Activated T-helper 1 cell treated with anti-CD3 and anti-CD28 coated beads, Interleukin-12 subunit alpha, Interleukin-12 subunit beta, Interleukin-2, Interleukin-4 antibody, amounts not matched to agents 30 ng/mL and 10 ng/mL and 1 ng/mL, durations not matched to agents 14 hours and 24 hours and 36 hours (primary cell): ENCODE measurements at regions of chrX and their contacts with region 1.

Region 1: GRCh38 chrX:39859991-39860861 is 237.5 kb downstream of the BCOR start:
- DNase-seq: peak; percentile 79
- H3K4me3 Mint-ChIP-seq: peak overlapping the region; percentile 70
- H3K27ac Mint-ChIP-seq: peak overlapping the region; percentile 98
- H3K4me1 Mint-ChIP-seq: peaks cover 60% of the 10 kb centered on the region
- H3K27me3 Mint-ChIP-seq: no peaks in the 10 kb centered on the region

Region 2: GRCh38 chrX:39201305-39201990 is 658.8 kb before region 1 on chrX:
- intact Hi-C with region 1: loop called (anchors 10 kb)
- DNase-seq: no peak
- H3K4me3 Mint-ChIP-seq: no peak overlapping the region
- H3K27ac Mint-ChIP-seq: peak overlapping the region; percentile 79
- H3K4me1 Mint-ChIP-seq: peaks cover 82% of the 10 kb centered on the region
- H3K27me3 Mint-ChIP-seq: no peaks in the 10 kb centered on the region

Region 3: DNA sequence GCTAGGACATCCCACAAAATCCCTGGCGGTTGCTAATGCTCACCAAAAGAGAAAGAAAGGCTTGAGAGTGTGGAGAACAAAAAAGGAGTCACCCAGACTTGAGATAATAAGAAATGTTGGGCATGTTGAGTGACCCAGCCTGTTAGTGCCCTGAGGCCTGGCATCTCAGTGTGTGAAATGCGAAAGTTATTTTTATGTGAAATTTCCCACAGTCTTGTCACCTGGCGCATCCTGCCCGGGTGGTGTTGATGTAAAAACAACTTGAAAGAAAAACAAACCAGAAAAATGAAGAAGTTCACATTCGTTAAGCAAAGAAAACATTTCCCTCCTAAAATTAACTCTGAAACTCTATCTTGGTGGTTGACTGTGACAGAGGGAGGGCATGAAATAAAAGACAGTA is 563.8 kb before region 1 on chrX:
- intact Hi-C with region 1: no loop called
- DNase-seq: no peak
- H3K4me3 Mint-ChIP-seq: no peak overlapping the region
- H3K27ac Mint-ChIP-seq: no peak overlapping the region
- H3K4me1 Mint-ChIP-seq: peaks cover 46% of the 10 kb centered on the region
- H3K27me3 Mint-ChIP-seq: no peaks in the 10 kb centered on the region

Region 4: GRCh38 chrX:39550795-39551361 is 309.3 kb before region 1 on chrX:
- intact Hi-C with region 1: no loop called
- DNase-seq: no peak
- H3K4me3 Mint-ChIP-seq: no peak overlapping the region
- H3K27ac Mint-ChIP-seq: no peak overlapping the region
- H3K4me1 Mint-ChIP-seq: no peaks in the 10 kb centered on the region
- H3K27me3 Mint-ChIP-seq: peaks cover 2% of the 10 kb centered on the region

Region 5: GRCh38 chrX:39730662-39731397 is 129.4 kb before region 1 on chrX:
- intact Hi-C with region 1: loop called (anchors 1 kb)
- DNase-seq: peak; percentile 31
- H3K4me3 Mint-ChIP-seq: peak overlapping the region; percentile 54
- H3K27ac Mint-ChIP-seq: peak overlapping the region; percentile 84
- H3K4me1 Mint-ChIP-seq: peaks cover 30% of the 10 kb centered on the region
- H3K27me3 Mint-ChIP-seq: no peaks in the 10 kb centered on the region

Region 6: GRCh38 chrX:39814391-39814790 is 45.8 kb before region 1 on chrX:
- intact Hi-C with region 1: loop called (anchors 1 kb)
- DNase-seq: peak; percentile 8
- H3K4me3 Mint-ChIP-seq: no peak overlapping the region
- H3K27ac Mint-ChIP-seq: no peak overlapping the region
- H3K4me1 Mint-ChIP-seq: peaks cover 42% of the 10 kb centered on the region
- H3K27me3 Mint-ChIP-seq: no peaks in the 10 kb centered on the region

Region 7: DNA sequence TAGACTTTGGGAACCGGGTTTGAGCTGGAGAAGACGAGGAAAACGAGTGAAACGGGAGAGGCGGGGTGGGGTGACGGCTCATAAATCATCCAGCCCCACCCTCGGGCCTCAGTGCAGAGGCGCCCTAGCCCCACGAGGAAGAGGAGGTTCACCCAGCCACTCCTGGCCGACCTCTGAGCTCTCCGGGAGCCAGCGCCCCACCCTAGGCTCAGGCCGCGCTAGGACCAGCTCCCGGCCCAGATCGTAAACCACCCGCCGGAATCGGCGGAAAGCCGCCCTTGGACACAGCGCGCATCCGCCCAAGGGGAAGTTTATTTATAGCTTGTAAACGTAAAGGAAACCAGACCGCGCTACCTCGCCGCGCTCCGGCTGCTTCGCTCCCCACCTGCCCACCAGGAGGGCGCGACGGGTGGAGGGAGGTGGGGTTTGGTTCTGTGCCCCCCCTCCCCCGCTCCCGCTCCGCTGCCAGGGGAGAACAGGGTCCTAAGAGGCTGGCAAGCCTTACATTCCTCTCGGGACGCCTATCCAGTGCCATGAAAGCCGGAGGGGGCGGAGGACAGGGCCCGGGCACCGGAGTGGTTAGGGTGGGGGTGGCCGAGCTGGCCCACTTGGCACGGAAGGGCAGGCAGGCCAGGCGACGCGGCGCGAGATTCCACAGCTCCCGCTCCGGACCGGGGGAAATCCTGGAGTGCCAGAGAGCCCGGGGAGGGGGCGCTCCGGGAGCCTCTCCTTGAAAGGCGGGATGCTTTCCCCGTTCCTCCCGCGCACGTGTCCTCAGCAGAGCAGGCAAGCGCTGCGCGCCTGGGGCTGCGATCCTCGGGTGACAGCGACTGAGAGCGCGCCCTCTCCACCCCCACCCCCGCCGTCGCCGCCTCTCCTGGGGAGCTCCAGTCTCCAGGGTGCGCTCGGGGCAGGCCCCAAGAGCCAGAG is 153.3 kb after region 1 on chrX:
- intact Hi-C with region 1: loop called (anchors 2 kb)
- DNase-seq: peak; percentile 43
- H3K4me3 Mint-ChIP-seq: peak overlapping the region; percentile 74
- H3K27ac Mint-ChIP-seq: peak overlapping the region; percentile 75
- H3K4me1 Mint-ChIP-seq: peaks cover 11% of the 10 kb centered on the region
- H3K27me3 Mint-ChIP-seq: peaks cover 6% of the 10 kb centered on the region

Region 8: GRCh38 chrX:40201329-40201885 is 341.2 kb after region 1 on chrX:
- intact Hi-C with region 1: no loop called
- DNase-seq: peak; percentile 28
- H3K4me3 Mint-ChIP-seq: no peak overlapping the region
- H3K27ac Mint-ChIP-seq: peak overlapping the region; percentile 58
- H3K4me1 Mint-ChIP-seq: peaks cover 17% of the 10 kb centered on the region
- H3K27me3 Mint-ChIP-seq: no peaks in the 10 kb centered on the region